AG04449 (cell line): ENCODE measurements at regions of chr20 and their contacts with region 1.

Region 1: DNA sequence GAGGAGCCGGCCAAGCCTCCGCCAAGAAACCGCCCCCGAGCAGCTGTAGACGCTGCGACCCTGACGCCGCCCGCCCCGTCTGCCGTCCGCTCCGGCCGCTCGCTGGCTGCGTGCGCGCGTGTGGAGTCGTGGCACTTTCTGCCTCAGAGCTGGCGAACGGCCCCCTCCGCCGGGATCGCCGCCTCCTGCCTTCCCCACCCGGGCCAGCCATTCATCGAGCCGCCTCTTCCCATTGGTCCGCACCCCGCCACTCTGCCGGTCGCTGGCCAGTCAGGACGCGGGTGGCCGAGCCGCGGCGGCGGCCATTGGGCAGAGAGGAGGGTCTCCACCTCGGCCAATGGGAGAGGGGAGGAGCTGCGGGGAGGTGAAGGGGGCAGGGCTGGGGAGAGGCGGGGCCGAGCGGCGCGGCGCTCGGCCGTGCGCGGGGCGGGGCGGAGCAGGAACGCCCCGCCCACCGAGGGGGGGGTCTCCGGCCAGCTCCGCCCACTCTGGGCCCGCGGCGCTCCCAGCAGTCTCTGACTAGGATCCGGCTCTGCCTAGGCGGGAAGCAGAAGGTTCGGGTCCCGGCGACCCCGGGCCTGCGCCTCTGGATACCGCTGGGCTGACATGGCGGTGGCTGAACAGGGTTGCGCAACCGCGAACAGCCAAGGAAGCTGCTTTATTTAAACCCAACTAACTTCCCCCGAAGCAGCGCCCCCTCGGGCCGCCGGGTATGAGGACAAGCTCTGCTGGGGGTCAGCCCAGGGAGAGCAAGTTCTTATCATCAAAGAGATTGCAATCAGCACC is at the start of gene RRBP1:
- DNase-seq: peak; percentile 78
- H3K4me3 ChIP-seq: peak within 1 kb of the TSS; percentile 80
- CTCF ChIP-seq: peak; percentile 69

Region 2: DNA sequence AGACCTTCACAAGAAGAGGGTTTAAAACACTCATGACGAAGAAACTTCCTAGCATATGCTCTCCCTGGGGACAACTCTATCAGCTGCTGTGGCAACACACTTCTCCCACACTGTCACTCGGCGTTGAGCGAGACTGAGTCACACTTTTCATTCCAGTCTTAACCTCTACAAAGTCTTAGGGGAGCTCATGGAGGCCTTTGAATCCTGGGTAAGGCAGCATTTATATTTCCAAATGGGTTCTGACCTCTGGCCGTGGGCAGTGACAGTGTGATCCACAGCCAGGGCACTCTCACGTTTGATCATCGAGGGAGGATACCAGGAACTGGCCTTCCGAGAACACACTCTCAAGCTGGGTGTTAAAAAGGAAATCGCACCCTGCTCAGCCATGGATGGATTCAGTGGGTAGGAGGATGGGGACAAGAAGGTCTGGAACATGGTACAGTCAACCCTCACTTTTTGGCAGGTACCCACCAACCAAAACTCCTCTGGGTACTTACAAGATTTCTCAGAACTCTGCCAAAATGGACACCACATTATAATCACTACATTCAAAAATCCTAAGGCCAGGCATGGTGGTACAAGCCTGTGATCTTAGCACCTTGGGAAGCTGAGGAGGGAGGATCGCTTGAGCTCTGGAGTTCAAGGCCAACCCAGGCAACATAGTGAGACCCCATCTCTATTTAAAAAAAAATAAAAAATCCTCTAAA is 19.8 kb before region 1 on chr20:
- CTCF ChIA-PET with region 1: interaction called, 49 read pairs
- POLR2A ChIA-PET with region 1: interaction called, 6 read pairs
- DNase-seq: no peak
- H3K4me3 ChIP-seq: no peak overlapping the region
- CTCF ChIP-seq: no peak

Region 3: GRCh38 chr20:17699931-17700657 is 17.8 kb after region 1 on chr20 and contains the start of gene BANF2:
- CTCF ChIA-PET with region 1: interaction called, 18 read pairs
- POLR2A ChIA-PET with region 1: interaction called, 6 read pairs
- DNase-seq: no peak
- H3K4me3 ChIP-seq: no peak within 1 kb of the TSS
- CTCF ChIP-seq: no peak

Region 4: DNA sequence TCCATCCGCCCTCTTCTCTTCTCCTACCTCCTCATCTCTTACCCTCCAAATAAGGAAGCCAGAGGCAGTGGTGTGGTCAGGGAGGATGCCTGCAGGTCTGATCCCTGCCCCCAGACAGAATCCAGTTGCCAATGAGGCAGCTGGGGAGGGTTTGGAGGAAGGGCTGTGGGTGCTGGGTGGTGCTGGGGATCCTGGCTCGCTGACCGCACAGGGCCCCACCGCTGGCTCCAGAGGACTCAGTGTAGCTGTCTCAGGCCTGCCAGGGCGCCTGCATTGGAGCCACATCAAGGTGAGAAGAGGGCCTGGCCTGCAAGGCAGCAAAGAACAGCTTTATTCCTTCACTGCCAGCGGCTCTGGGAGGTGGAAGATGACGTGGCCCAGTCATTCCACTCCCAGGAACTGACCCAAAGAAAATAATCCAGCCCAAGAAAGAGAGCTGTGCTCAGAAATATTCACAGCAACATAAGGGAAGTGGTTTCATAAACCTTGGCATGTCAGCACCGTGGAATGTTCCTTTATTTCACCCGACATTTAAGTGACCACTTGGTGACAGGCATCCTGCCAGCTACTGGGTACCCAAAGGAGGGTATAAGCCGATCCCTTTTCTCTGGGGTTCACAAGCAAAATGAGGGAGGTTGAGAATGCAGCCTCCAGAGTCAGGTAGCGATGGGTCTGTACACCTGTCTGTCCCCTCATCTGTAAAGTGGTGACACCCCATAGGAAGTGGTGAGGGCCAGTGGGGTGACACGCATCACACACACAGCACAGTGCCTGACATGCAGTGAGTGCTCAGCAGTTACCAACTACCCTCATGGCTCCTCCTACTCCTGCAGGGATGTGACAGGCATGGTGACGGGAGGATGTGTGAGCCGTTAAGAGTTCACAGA is 161.2 kb after region 1 on chr20:
- CTCF ChIA-PET with region 1: interaction called, 7 read pairs
- POLR2A ChIA-PET with region 1: interaction called, 13 read pairs
- DNase-seq: peak; percentile 92
- H3K4me3 ChIP-seq: peak overlapping the region; percentile 23
- CTCF ChIP-seq: no peak

Region 5: GRCh38 chr20:17873410-17874270 is 191.3 kb after region 1 on chr20:
- CTCF ChIA-PET with region 1: interaction called, 21 read pairs
- POLR2A ChIA-PET with region 1: interaction called, 35 read pairs
- DNase-seq: peak; percentile 81
- H3K4me3 ChIP-seq: peak overlapping the region; percentile 18; the same call in 1 of the 2 replicates
- CTCF ChIP-seq: no peak

Region 6: GRCh38 chr20:17938871-17939619 is 256.7 kb after region 1 on chr20:
- CTCF ChIA-PET with region 1: interaction called, 35 read pairs
- POLR2A ChIA-PET with region 1: interaction called, 19 read pairs
- DNase-seq: no peak
- H3K4me3 ChIP-seq: no peak overlapping the region
- CTCF ChIP-seq: peak; percentile 92